Activated T-helper 1 cell treated with anti-CD3 and anti-CD28 coated beads, Interleukin-12 subunit alpha, Interleukin-12 subunit beta, Interleukin-2, Interleukin-4 antibody, amounts not matched to agents 30 ng/mL and 10 ng/mL and 1 ng/mL, durations not matched to agents 14 hours and 24 hours and 36 hours (primary cell): ENCODE measurements at regions of chr2 and their contacts with region 1.

Region 1: DNA sequence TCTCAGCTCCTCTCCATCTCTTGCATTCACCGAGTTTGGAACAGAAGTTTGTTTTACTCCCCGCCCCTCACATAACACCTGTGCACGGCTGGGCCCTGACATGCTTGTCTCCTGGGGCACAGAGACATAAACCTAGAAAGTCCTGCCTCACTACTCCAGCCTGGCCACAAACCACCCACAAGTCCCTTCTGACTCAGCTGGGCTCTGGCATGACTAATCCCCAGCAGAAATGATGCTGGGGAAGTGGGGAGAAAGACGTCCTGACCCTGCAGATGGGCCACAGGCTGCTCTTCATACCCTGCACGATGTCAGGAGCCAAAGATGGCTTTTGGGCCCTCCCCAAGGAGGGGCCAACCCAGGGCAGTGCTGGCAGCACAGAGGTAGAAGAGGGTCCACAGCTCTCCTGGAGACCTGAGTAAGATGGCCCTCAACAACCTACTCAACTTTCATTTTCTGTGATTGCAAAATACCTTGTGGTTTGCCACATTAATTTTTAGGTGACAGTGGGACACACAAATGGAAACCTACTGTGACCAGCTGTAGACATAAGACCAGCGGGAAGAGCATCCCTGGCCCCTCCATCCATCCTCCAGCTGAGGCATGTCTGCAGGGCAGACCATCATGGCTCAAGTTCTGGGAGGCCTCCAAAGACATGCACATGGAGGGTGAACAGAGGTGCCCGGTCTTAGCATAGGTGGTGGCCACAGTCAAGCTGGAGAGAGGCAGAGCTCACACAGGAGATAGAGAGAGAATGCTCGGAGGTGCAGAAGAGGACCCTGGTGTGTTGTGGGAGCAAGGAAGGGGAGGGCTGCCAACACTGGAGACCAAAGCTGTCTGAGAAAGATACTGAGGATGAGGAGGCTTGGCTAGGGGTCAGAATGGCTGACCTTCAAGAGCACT is 40.0 kb downstream of the DNMT3A start:
- DNase-seq: peak; percentile 76
- H3K4me3 Mint-ChIP-seq: peak overlapping the region; percentile 53
- H3K27ac Mint-ChIP-seq: peak overlapping the region; percentile 40
- H3K4me1 Mint-ChIP-seq: peaks cover 40% of the 10 kb centered on the region
- H3K27me3 Mint-ChIP-seq: no peaks in the 10 kb centered on the region

Region 2: GRCh38 chr2:25043241-25043867 is 258.3 kb before region 1 on chr2:
- intact Hi-C with region 1: no loop called
- DNase-seq: no peak
- H3K4me3 Mint-ChIP-seq: peak overlapping the region; percentile 81
- H3K27ac Mint-ChIP-seq: no peak overlapping the region
- H3K4me1 Mint-ChIP-seq: peaks cover 26% of the 10 kb centered on the region
- H3K27me3 Mint-ChIP-seq: peaks cover 48% of the 10 kb centered on the region

Region 3: DNA sequence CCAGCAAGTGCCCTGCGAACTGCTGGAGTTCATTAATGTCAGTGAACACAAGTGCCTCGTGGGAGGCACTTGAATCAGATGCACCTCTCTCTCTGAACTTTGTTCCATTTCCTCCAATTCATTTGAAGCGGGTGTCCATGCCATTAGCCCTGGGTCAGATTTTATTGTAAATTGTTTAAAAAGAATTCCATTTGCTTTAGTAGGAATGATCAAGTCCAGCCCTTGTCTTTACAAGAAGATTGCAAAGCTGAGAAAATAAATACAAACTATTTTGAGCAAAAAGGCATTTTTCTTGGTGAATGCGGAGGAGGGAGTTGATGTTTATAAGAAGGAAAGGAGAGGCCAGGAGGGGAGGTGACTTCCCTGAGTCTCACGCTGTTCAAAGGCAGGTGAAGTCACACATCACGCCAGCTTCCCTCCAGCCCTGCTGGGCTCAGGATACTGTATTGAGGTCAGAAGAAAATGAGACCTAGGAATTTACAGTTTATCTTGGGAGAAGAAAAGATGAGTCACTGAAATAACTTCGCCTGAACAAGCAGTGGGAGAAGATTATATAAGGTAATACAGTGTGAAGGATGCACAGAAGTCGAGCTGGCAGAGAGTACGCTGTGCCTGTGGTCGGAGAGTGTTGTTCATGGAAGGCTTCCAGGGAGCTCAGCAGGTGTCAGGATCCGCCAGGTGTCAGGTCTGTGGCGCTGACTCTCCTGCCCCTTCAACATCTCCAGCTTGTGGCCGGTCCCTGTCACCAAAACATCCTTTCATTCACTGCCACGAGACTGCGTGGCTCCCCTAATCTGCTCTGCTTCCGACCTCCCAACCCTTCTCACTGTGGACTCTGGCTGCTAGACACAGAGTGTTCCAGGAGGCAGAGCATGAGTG is 223.3 kb before region 1 on chr2:
- intact Hi-C with region 1: no loop called
- DNase-seq: no peak
- H3K4me3 Mint-ChIP-seq: no peak overlapping the region
- H3K27ac Mint-ChIP-seq: no peak overlapping the region
- H3K4me1 Mint-ChIP-seq: no peaks in the 10 kb centered on the region
- H3K27me3 Mint-ChIP-seq: peaks cover 13% of the 10 kb centered on the region

Region 4: DNA sequence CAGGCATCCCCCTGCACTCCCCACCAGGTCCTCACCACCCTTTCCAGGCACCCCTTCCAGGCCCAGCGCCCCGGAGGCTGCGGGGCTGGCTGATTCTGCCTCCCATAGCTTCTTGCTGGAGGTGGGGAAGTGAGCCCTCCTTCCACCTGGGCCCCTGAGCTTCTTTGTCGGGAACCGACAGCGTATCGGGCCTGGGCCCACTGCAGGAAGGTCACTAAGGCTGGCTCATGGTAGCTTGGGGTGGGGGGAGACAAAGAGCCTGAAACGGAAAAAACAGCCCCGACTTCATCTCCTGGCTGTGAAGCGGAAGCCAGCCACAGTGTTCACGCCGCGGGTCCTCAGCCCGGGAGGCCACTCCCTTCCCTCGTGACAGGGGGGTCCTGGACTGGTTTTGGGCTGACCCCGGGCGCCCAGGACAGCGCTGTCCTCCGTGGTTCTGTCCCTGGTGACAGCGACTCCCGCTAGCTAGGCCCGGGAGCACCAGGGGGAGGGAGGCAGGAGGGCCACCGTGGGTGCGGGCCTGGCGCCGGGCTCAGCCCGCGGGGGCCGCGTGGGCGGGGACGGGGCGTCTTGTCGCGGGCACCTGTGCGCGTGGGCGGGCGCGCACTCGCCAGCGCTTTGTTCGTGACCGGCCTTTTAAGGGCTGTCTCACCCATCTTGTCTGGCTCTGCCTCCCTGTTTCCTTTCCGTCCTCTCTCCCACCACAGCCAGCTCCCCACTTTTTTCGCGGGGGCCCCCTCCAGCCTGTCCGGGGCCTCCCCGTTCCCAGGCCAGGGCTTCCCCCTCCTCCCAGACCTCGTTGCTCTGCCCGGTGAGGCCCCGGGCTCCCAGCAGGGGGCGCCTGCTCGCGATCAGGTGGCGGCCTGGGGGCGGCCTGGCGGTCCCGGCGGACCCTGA is 24.9 kb before region 1 on chr2:
- intact Hi-C with region 1: loop called (anchors 1 kb)
- DNase-seq: peak; percentile 73
- H3K4me3 Mint-ChIP-seq: peak overlapping the region; percentile 53
- H3K27ac Mint-ChIP-seq: peak overlapping the region; percentile 81
- H3K4me1 Mint-ChIP-seq: peaks cover 67% of the 10 kb centered on the region
- H3K27me3 Mint-ChIP-seq: no peaks in the 10 kb centered on the region

Region 5: GRCh38 chr2:25286025-25286400 is 15.7 kb before region 1 on chr2:
- intact Hi-C with region 1: loop called (anchors 2 kb)
- DNase-seq: peak; percentile 67
- H3K4me3 Mint-ChIP-seq: peak overlapping the region; percentile 72
- H3K27ac Mint-ChIP-seq: peak overlapping the region; percentile 98
- H3K4me1 Mint-ChIP-seq: peaks cover 26% of the 10 kb centered on the region
- H3K27me3 Mint-ChIP-seq: no peaks in the 10 kb centered on the region

Region 6: DNA sequence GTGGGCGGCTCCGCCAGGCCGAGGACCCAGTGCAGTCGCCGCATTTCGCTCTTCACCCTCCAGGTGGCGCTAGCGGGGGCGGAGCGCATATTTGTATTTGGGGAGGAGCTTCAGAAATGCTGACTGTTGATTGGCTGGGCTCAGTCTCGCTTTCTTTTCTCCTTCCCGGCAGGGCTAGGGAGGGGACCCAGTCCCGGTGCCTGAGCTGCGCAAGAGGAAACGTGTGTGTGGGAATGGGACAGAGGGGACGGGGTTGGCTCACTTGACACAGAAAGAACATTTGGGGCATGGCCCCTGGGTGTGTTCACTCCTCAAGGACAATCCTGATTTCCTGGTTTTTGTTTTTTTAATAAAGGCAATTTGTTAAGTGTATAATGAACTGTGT is 60.3 kb after region 1 on chr2:
- intact Hi-C with region 1: loop called (anchors 2 kb)
- DNase-seq: peak; percentile 93
- H3K4me3 Mint-ChIP-seq: peak overlapping the region; percentile 84
- H3K27ac Mint-ChIP-seq: peak overlapping the region; percentile 94
- H3K4me1 Mint-ChIP-seq: peaks cover 26% of the 10 kb centered on the region
- H3K27me3 Mint-ChIP-seq: peaks cover 2% of the 10 kb centered on the region

Region 7: GRCh38 chr2:25558262-25558661 is 256.6 kb after region 1 on chr2:
- intact Hi-C with region 1: loop called (anchors 1 kb)
- DNase-seq: peak; percentile 53
- H3K4me3 Mint-ChIP-seq: peak overlapping the region; percentile 46
- H3K27ac Mint-ChIP-seq: peak overlapping the region; percentile 98
- H3K4me1 Mint-ChIP-seq: peaks cover 63% of the 10 kb centered on the region
- H3K27me3 Mint-ChIP-seq: no peaks in the 10 kb centered on the region

Region 8: DNA sequence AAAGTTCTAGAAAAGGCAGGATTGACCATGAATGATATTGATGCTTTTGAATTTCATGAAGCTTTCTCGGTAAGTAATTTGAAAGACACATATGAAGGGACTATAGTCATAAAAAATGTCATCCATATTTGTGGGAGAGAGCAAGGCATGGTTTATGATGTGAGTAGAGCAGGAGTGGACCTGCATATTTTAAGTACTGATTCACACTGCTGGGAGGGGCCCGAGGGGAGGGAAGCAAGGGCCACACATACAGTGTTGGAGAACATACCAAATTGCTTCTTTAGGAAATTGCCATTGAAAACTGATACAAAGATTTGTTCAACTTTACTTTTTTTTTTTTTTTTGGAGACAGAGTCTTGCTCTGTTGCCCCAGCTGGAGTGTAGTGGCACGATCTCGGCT is 982.4 kb after region 1 on chr2:
- intact Hi-C with region 1: no loop called
- DNase-seq: no peak
- H3K4me3 Mint-ChIP-seq: no peak overlapping the region
- H3K27ac Mint-ChIP-seq: no peak overlapping the region
- H3K4me1 Mint-ChIP-seq: no peaks in the 10 kb centered on the region
- H3K27me3 Mint-ChIP-seq: no peaks in the 10 kb centered on the region